ENCODE measurements at regions of chr9 and their contacts with region 1.

Region 1: GRCh38 chr9:123997665-123998277 is 13.8 kb upstream of the LHX2 start:
- DNase-seq: peak; percentile 74
- H3K4me3 Mint-ChIP-seq: peak overlapping the region; percentile 29
- H3K27ac Mint-ChIP-seq: peak overlapping the region; percentile 56
- H3K4me1 Mint-ChIP-seq: peaks cover 36% of the 10 kb centered on the region
- H3K27me3 Mint-ChIP-seq: peaks cover 72% of the 10 kb centered on the region

Region 2: GRCh38 chr9:123867034-123867433 is 130.7 kb before region 1 on chr9:
- CTCF ChIA-PET with region 1: interaction called, 3 read pairs
- intact Hi-C with region 1: loop called (anchors 5 kb)
- DNase-seq: no peak
- H3K4me3 Mint-ChIP-seq: no peak overlapping the region
- H3K27ac Mint-ChIP-seq: peak overlapping the region; percentile 78
- H3K4me1 Mint-ChIP-seq: peaks cover 34% of the 10 kb centered on the region
- H3K27me3 Mint-ChIP-seq: no peaks in the 10 kb centered on the region

Region 3: DNA sequence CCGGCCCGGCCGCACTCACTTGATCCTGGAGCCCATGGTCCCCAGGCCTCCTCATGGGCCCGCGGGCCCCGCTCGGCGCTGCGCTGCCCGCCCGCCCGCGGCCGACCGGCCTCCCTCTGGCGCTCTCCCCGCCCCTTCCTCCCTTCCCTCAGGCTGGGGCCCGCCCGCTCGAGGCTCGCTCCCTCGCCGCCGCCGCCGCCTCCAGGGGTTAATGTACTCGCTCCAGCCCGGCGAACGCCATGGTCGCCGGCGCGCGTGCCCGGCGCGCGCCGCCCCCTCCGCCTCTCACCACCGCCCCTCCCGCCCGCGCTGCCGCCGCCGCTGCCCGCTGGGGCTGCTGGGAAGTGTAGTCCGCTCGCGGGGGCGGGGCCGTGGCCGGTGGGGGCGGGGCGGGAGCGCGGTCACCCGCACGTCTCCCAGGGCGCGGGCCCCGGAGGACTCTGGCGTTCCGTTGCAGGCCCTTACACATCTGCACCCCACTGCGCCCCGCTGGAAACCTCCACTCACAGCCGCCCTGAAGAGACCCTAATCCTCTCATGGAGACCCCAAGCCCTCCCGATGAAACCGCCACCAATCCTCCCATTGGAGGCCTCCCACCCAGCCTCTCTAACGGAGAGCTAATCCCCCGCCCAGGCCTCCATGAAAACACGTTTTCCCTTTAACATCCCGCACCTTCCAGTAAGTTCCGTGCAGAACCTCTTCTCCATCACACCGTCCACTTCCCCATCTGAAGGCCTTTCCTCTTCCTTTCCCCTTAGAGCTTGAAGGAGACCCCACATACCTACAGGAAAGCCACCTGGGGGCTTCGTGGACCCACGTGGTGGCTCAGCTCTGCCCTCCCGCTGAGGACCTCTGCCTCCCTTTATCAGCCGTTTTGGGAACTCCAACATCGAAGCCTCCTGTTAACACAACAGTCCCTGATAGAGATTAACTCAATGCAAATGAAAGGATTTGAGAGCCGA is 67.6 kb before region 1 on chr9 and contains the start of gene DENND1A:
- CTCF ChIA-PET with region 1: no interaction called
- intact Hi-C with region 1: loop called (anchors 2 kb)
- DNase-seq: peak; percentile 89
- H3K4me3 Mint-ChIP-seq: peak within 1 kb of the TSS; percentile 79
- H3K27ac Mint-ChIP-seq: peak within 1 kb of the TSS; percentile 78
- H3K4me1 Mint-ChIP-seq: peaks cover 38% of the 10 kb centered on the region
- H3K27me3 Mint-ChIP-seq: peaks cover 4% of the 10 kb centered on the region
- total RNA-seq, gene DENND1A: 28.4 to 29.6 TPM

Region 4: DNA sequence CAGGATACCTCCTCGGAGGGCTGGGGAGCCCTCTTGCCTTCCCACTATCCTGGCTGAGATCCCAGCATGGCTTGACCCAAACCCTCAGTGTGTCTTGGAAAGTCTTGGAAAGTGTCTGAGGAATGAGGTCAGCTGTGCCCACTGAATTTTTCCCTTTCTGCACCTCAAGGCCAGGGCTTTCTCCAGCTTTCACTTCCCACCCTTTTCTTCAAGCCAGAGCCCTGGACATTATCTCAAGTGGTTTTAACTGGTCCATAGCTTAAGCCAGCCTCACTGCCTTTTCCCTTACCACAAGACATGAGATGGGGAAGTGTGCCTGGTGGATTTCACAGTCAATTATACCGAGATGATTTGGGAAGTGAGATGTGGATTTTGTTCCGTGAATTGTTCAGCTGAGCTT is 21.9 kb before region 1 on chr9:
- CTCF ChIA-PET with region 1: no interaction called
- intact Hi-C with region 1: loop called (anchors 2 kb)
- DNase-seq: no peak
- H3K4me3 Mint-ChIP-seq: no peak overlapping the region
- H3K27ac Mint-ChIP-seq: no peak overlapping the region
- H3K4me1 Mint-ChIP-seq: no peaks in the 10 kb centered on the region
- H3K27me3 Mint-ChIP-seq: peaks cover 20% of the 10 kb centered on the region

Region 5: GRCh38 chr9:124011420-124012301 is 13.9 kb after region 1 on chr9 and contains the start of gene LHX2:
- CTCF ChIA-PET with region 1: interaction called, 3 read pairs
- intact Hi-C with region 1: loop called (anchors 1 kb)
- DNase-seq: peak; percentile 71
- H3K4me3 Mint-ChIP-seq: peak within 1 kb of the TSS; percentile 43
- H3K27ac Mint-ChIP-seq: no peak within 1 kb of the TSS
- H3K4me1 Mint-ChIP-seq: peaks cover 53% of the 10 kb centered on the region
- H3K27me3 Mint-ChIP-seq: peaks cover 75% of the 10 kb centered on the region
- total RNA-seq, gene LHX2: not detected

Region 6: GRCh38 chr9:124040935-124041816 is 43.4 kb after region 1 on chr9:
- CTCF ChIA-PET with region 1: interaction called, 10 read pairs
- intact Hi-C with region 1: loop called (anchors 2 kb)
- DNase-seq: peak; percentile 50
- H3K4me3 Mint-ChIP-seq: peak overlapping the region; percentile 17
- H3K27ac Mint-ChIP-seq: no peak overlapping the region
- H3K4me1 Mint-ChIP-seq: peaks cover 9% of the 10 kb centered on the region
- H3K27me3 Mint-ChIP-seq: peaks cover 67% of the 10 kb centered on the region

Region 7: GRCh38 chr9:124210697-124211096 is 212.9 kb after region 1 on chr9:
- CTCF ChIA-PET with region 1: no interaction called
- intact Hi-C with region 1: loop called (anchors 5 kb)
- DNase-seq: peak; percentile 77
- H3K4me3 Mint-ChIP-seq: no peak overlapping the region
- H3K27ac Mint-ChIP-seq: peak overlapping the region; percentile 33
- H3K4me1 Mint-ChIP-seq: peaks cover 32% of the 10 kb centered on the region
- H3K27me3 Mint-ChIP-seq: no peaks in the 10 kb centered on the region